Activated CD4-positive, alpha-beta T cell treated with anti-CD3 and anti-CD28 coated beads, Interleukin-2, amount 10 ng/mL, durations not matched to agents 24 days and 14 days (primary cell): ENCODE measurements at regions of chr6 and their contacts with region 1.

Region 1: GRCh38 chr6:139262519-139263300 is 29.1 kb downstream of the TXLNB start:
- DNase-seq: peak; percentile 77
- H3K4me3 Mint-ChIP-seq: peak overlapping the region; percentile 75
- H3K27ac Mint-ChIP-seq: peak overlapping the region; percentile 90
- H3K4me1 Mint-ChIP-seq: peaks cover 21% of the 10 kb centered on the region
- H3K27me3 Mint-ChIP-seq: no peaks in the 10 kb centered on the region

Region 2: GRCh38 chr6:139278190-139278589 is 15.5 kb after region 1 on chr6:
- intact Hi-C with region 1: loop called (anchors 2 kb)
- DNase-seq: peak; percentile 45
- H3K4me3 Mint-ChIP-seq: no peak overlapping the region
- H3K27ac Mint-ChIP-seq: no peak overlapping the region
- H3K4me1 Mint-ChIP-seq: peaks cover 25% of the 10 kb centered on the region
- H3K27me3 Mint-ChIP-seq: no peaks in the 10 kb centered on the region

Region 3: GRCh38 chr6:139334806-139335446 is 72.2 kb after region 1 on chr6:
- intact Hi-C with region 1: no loop called
- DNase-seq: no peak
- H3K4me3 Mint-ChIP-seq: no peak overlapping the region
- H3K27ac Mint-ChIP-seq: no peak overlapping the region
- H3K4me1 Mint-ChIP-seq: no peaks in the 10 kb centered on the region
- H3K27me3 Mint-ChIP-seq: no peaks in the 10 kb centered on the region